ENCODE measurements at regions of chr11 and their contacts with region 1.

Region 1: GRCh38 chr11:22875869-22876473 is 15.7 kb upstream of the CCDC179 start:
- DNase-seq: peak; percentile 50 to 66 (median 62)
- H3K4me3 ChIP-seq: no peak overlapping the region
- H3K4me3 Mint-ChIP-seq: no peak overlapping the region
- H3K27ac ChIP-seq: no peak overlapping the region
- H3K27ac Mint-ChIP-seq: no peak overlapping the region
- H3K4me1 ChIP-seq: no peaks in the 10 kb centered on the region
- H3K4me1 Mint-ChIP-seq: no peaks in the 10 kb centered on the region
- H3K27me3 ChIP-seq: no peaks in the 10 kb centered on the region
- H3K27me3 Mint-ChIP-seq: no peaks in the 10 kb centered on the region

Region 2: GRCh38 chr11:22829231-22830081 is 46.5 kb before region 1 on chr11 and contains the start of gene SVIP:
- CTCF ChIA-PET with region 1: interaction called, 14 read pairs
- POLR2A ChIA-PET with region 1: interaction called, 5 read pairs
- intact Hi-C with region 1: no loop called
- DNase-seq: peak; percentile 89 to 91 (median 89)
- H3K4me3 ChIP-seq: peak within 1 kb of the TSS; percentile 33 to 81
- H3K4me3 Mint-ChIP-seq: peak within 1 kb of the TSS; percentile 93 to 99 (median 95)
- H3K27ac ChIP-seq: peak within 1 kb of the TSS; percentile 75
- H3K27ac Mint-ChIP-seq: peak within 1 kb of the TSS; percentile 94 to 97 (median 95)
- H3K4me1 ChIP-seq: peaks cover 19% of the 10 kb centered on the region
- H3K4me1 Mint-ChIP-seq: peaks cover 8 to 22% (median 12%) of the 10 kb centered on the region in 4 donors
- H3K27me3 ChIP-seq: no peaks in the 10 kb centered on the region
- H3K27me3 Mint-ChIP-seq: no peaks in the 10 kb centered on the region
- total RNA-seq, gene SVIP: 64.3 to 73.8 TPM

Region 3: DNA sequence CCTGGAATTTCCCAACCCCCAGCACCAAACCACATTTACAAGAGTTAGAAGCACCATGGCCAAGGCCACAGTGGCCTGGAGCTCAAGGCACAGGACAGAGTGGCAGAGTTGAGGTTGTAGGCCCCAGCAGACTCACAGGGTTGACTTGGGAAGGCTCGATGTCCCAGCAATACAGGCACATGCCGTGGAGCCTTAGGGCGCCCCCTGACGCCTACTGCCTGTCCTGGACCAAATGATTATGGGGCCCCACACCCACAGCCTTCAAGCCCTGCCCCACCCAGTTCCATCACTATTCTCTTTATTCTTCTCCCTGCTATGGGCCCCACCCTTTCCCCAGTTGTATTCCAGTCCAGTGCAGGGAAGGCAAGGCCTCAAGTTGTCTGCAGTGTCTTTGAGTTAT is 15.7 kb before region 1 on chr11 and contains the start of gene CCDC179:
- CTCF ChIA-PET with region 1: interaction called, 12 read pairs
- POLR2A ChIA-PET with region 1: no interaction called
- intact Hi-C with region 1: no loop called
- DNase-seq: no peak
- H3K4me3 ChIP-seq: no peak within 1 kb of the TSS
- H3K4me3 Mint-ChIP-seq: no peak within 1 kb of the TSS
- H3K27ac ChIP-seq: no peak within 1 kb of the TSS
- H3K27ac Mint-ChIP-seq: peak within 1 kb of the TSS in 1 of 7 donors; percentile 69
- H3K4me1 ChIP-seq: no peaks in the 10 kb centered on the region
- H3K4me1 Mint-ChIP-seq: no peaks in the 10 kb centered on the region
- H3K27me3 ChIP-seq: no peaks in the 10 kb centered on the region
- H3K27me3 Mint-ChIP-seq: no peaks in the 10 kb centered on the region
- total RNA-seq, gene CCDC179: not detected

Region 4: GRCh38 chr11:22890227-22890626 is 14.3 kb after region 1 on chr11:
- CTCF ChIA-PET with region 1: interaction called, 16 read pairs
- POLR2A ChIA-PET with region 1: no interaction called
- intact Hi-C with region 1: no loop called
- DNase-seq: no peak
- H3K4me3 ChIP-seq: no peak overlapping the region
- H3K4me3 Mint-ChIP-seq: no peak overlapping the region
- H3K27ac ChIP-seq: no peak overlapping the region
- H3K27ac Mint-ChIP-seq: no peak overlapping the region
- H3K4me1 ChIP-seq: no peaks in the 10 kb centered on the region
- H3K4me1 Mint-ChIP-seq: no peaks in the 10 kb centered on the region
- H3K27me3 ChIP-seq: no peaks in the 10 kb centered on the region
- H3K27me3 Mint-ChIP-seq: no peaks in the 10 kb centered on the region

Region 5: DNA sequence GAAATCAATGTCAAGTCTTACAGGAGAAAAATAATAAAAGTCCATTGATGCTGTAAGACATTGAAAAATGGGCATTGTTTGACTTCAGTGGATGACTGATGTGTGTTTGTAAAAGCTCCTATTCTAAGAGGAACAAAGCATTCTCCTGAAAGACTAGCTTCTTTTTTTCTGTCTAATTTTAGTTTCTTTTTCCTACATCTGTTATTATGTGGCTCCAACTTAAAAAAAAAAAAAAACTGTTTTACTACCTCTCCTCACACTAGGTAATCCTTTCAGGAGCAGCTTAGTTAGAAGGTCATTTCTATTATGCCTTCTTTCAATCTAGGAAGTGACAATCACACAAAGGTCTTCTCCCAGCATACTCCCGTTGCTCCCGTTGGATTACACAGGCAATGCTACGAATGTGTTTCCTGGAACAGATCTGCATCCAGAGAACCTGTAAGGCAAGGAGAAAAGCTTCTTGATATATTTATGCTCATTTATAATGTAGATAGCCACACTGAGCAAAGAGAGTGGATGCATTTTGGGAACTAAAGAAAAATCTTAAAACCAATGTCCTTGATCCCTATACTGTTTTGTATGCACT is 579.4 kb after region 1 on chr11:
- CTCF ChIA-PET with region 1: no interaction called
- POLR2A ChIA-PET with region 1: no interaction called
- intact Hi-C with region 1: no loop called
- DNase-seq: no peak
- H3K4me3 ChIP-seq: no peak overlapping the region
- H3K4me3 Mint-ChIP-seq: no peak overlapping the region
- H3K27ac ChIP-seq: no peak overlapping the region
- H3K27ac Mint-ChIP-seq: no peak overlapping the region
- H3K4me1 ChIP-seq: no peaks in the 10 kb centered on the region
- H3K4me1 Mint-ChIP-seq: no peaks in the 10 kb centered on the region
- H3K27me3 ChIP-seq: no peaks in the 10 kb centered on the region
- H3K27me3 Mint-ChIP-seq: no peaks in the 10 kb centered on the region

Measured in CD4-positive, alpha-beta memory T cell (primary cell).